Activated B cell treated with CpG ODN at 0.5 μM for 24 hours (primary cell): ENCODE measurements at regions of chr11 and their contacts with region 1.

Region 1: DNA sequence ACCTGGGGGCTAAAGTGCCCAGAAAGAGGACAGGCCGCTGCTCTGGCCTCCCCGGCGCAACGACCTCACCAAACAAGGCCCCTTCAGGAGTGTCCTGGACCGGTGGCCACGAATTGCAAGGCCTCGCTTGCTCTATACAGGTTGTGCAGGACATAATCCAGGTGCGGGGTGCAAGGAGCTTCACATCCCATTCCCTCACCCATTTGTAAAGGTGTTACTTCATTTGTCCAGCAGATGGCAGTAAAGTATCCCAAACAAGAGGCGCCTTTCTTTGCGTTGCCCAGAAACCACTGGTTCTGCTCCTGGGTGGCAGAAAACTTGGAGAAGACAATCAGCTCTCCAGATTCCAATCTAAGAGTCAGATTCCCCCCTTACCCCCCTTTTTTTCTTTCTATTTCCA is 35.9 kb upstream of the PRDM11 start:
- DNase-seq: no peak
- ATAC-seq: peak; percentile 73
- H3K4me3 Mint-ChIP-seq: no peak overlapping the region
- H3K27ac Mint-ChIP-seq: no peak overlapping the region
- H3K4me1 Mint-ChIP-seq: peaks cover 8% of the 10 kb centered on the region
- H3K27me3 Mint-ChIP-seq: peaks cover 38% of the 10 kb centered on the region
- CTCF ChIP-seq: no peak

Region 2: GRCh38 chr11:44877571-44878497 is 232.7 kb before region 1 on chr11:
- CTCF ChIA-PET with region 1: no interaction called
- POLR2A ChIA-PET with region 1: no interaction called
- intact Hi-C with region 1: no loop called
- DNase-seq: no peak
- ATAC-seq: no peak
- H3K4me3 Mint-ChIP-seq: no peak overlapping the region
- H3K27ac Mint-ChIP-seq: no peak overlapping the region
- H3K4me1 Mint-ChIP-seq: no peaks in the 10 kb centered on the region
- H3K27me3 Mint-ChIP-seq: no peaks in the 10 kb centered on the region
- CTCF ChIP-seq: no peak

Region 3: GRCh38 chr11:45180179-45180842 is 69.7 kb after region 1 on chr11:
- CTCF ChIA-PET with region 1: no interaction called
- POLR2A ChIA-PET with region 1: no interaction called
- intact Hi-C with region 1: loop called (anchors 5 kb)
- DNase-seq: peak; percentile 26
- ATAC-seq: peak; percentile 50
- H3K4me3 Mint-ChIP-seq: peak overlapping the region; percentile 84
- H3K27ac Mint-ChIP-seq: no peak overlapping the region
- H3K4me1 Mint-ChIP-seq: peaks cover 24% of the 10 kb centered on the region
- H3K27me3 Mint-ChIP-seq: peaks cover 8% of the 10 kb centered on the region
- CTCF ChIP-seq: no peak

Region 4: DNA sequence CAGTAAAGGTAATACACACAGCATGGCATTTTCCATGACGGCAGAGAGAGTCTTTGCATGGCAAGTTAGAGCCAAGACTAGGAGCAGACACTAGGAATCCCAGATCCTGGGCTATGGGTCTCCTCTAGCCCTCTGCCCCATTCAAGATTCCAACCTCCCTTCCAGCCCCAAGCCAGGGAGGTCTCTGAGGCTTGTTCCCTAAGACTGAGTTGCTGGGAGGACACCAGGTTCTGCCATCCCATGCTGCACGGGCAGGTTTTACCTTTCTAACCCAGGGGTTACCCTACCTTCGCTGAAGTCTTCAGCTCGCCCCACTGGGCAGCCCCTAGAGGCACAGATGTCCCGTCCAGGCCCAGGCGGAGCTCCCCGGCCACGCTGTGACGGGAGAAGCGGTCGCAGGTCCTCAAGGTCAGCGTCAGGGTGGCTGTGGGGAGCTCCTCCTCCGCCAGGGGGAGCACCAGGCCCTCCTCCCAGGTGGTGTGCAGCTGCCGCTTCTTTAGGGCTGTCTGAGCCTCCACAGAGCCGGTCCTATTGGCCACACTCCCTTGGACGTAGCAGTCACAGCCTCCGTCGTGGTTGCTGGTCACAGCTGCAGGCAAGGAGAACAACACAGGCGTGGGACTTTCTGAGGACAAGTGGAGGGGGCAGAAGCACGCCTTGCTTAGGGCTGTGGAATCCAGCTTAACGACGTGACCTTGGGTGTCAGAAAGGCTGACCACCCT is 141.7 kb after region 1 on chr11:
- CTCF ChIA-PET with region 1: interaction called, 3 read pairs
- POLR2A ChIA-PET with region 1: no interaction called
- intact Hi-C with region 1: loop called (anchors 2 kb)
- DNase-seq: peak; percentile 22
- ATAC-seq: peak; percentile 37
- H3K4me3 Mint-ChIP-seq: no peak overlapping the region
- H3K27ac Mint-ChIP-seq: no peak overlapping the region
- H3K4me1 Mint-ChIP-seq: no peaks in the 10 kb centered on the region
- H3K27me3 Mint-ChIP-seq: peaks cover 26% of the 10 kb centered on the region
- CTCF ChIP-seq: no peak

Region 5: GRCh38 chr11:45294499-45294898 is 183.9 kb after region 1 on chr11:
- CTCF ChIA-PET with region 1: interaction called, 21 read pairs
- POLR2A ChIA-PET with region 1: interaction called, 4 read pairs
- intact Hi-C with region 1: loop called (anchors 1 kb)
- DNase-seq: no peak
- ATAC-seq: no peak
- H3K4me3 Mint-ChIP-seq: no peak overlapping the region
- H3K27ac Mint-ChIP-seq: no peak overlapping the region
- H3K4me1 Mint-ChIP-seq: no peaks in the 10 kb centered on the region
- H3K27me3 Mint-ChIP-seq: peaks cover 46% of the 10 kb centered on the region
- CTCF ChIP-seq: no peak

Region 6: GRCh38 chr11:45655347-45655756 is 544.8 kb after region 1 on chr11:
- CTCF ChIA-PET with region 1: interaction called, 4 read pairs
- POLR2A ChIA-PET with region 1: no interaction called
- intact Hi-C with region 1: loop called (anchors 1 kb)
- DNase-seq: peak; percentile 44
- ATAC-seq: peak; percentile 56
- H3K4me3 Mint-ChIP-seq: no peak overlapping the region
- H3K27ac Mint-ChIP-seq: no peak overlapping the region
- H3K4me1 Mint-ChIP-seq: peaks cover 3% of the 10 kb centered on the region
- H3K27me3 Mint-ChIP-seq: peaks cover 32% of the 10 kb centered on the region
- CTCF ChIP-seq: no peak